Activated CD8-positive, alpha-beta T cell treated with anti-CD3 and anti-CD28 coated beads for 36 hours (primary cell): ENCODE measurements at regions of chr2 and their contacts with region 1.

Region 1: DNA sequence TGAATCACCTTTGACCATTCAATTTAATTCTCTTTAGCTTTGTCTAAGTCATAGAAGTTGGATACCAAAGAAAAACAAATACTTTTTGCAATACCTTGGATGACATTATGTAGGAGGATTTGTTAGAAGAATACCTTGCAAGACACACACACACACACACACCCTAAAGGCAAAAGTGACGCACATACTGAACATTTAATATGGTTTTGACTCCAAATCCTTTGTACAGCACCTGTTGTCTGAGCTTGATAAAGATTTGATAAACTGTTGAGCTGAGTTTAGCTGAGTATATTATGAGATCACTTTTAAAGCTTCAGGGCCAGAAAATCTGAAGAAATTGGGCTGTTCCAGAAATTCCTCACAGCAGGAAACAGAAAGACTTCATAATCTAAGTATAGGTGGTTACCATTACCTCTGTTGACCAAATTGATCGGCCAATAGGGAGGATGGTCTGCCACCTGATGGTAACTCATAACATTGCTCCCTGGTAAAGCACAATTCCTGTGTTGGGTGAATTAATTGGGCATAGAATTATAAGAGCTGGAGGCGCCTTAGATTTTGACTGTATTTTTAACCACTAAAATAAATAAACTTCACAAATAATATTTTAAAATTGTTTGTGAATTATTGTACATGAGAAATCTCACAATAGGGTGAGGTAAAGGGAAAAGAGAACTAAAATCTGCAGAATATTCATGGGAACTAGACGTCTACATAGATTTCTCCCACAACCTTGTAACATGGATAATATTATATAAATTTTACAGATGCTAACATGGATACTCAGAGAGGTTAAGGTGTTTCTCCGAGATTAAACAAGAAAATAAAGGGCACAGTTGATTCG is 21.9 kb upstream of the RPIA start:
- DNase-seq: peak; percentile 56
- ATAC-seq: peak; percentile 95
- H3K4me3 Mint-ChIP-seq: no peak overlapping the region
- H3K27ac Mint-ChIP-seq: no peak overlapping the region
- H3K4me1 Mint-ChIP-seq: no peaks in the 10 kb centered on the region
- H3K27me3 Mint-ChIP-seq: no peaks in the 10 kb centered on the region
- CTCF ChIP-seq: peak; percentile 73

Region 2: GRCh38 chr2:88187038-88187676 is 482.4 kb before region 1 on chr2:
- CTCF ChIA-PET with region 1: no interaction called
- POLR2A ChIA-PET with region 1: no interaction called
- intact Hi-C with region 1: loop called (anchors 5 kb)
- DNase-seq: peak; percentile 72
- ATAC-seq: peak; percentile 46
- H3K4me3 Mint-ChIP-seq: no peak overlapping the region
- H3K27ac Mint-ChIP-seq: no peak overlapping the region
- H3K4me1 Mint-ChIP-seq: peaks cover 4% of the 10 kb centered on the region
- H3K27me3 Mint-ChIP-seq: peaks cover 10% of the 10 kb centered on the region
- CTCF ChIP-seq: no peak

Region 3: DNA sequence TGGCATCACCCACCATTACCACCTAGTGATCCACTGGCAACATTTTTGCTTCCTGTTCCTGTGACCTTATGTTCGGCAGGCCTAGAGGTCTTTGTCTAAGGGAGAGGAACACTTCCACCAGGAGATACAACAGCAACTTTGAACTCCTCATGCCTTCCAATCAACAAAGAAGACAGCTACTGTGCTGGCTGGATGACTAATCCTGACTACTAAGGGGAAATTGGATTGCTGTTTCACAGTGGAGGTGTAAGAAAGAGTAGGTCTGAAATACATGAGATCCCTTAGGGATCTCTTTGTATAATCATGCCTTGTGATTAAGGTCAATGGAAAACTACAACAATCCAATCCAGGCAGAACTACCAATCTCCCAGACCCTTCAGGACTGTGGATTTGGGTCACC is 87.6 kb before region 1 on chr2:
- CTCF ChIA-PET with region 1: interaction called, 191 read pairs
- POLR2A ChIA-PET with region 1: no interaction called
- intact Hi-C with region 1: no loop called
- DNase-seq: no peak
- ATAC-seq: no peak
- H3K4me3 Mint-ChIP-seq: no peak overlapping the region
- H3K27ac Mint-ChIP-seq: no peak overlapping the region
- H3K4me1 Mint-ChIP-seq: no peaks in the 10 kb centered on the region
- H3K27me3 Mint-ChIP-seq: no peaks in the 10 kb centered on the region
- CTCF ChIP-seq: no peak

Region 4: DNA sequence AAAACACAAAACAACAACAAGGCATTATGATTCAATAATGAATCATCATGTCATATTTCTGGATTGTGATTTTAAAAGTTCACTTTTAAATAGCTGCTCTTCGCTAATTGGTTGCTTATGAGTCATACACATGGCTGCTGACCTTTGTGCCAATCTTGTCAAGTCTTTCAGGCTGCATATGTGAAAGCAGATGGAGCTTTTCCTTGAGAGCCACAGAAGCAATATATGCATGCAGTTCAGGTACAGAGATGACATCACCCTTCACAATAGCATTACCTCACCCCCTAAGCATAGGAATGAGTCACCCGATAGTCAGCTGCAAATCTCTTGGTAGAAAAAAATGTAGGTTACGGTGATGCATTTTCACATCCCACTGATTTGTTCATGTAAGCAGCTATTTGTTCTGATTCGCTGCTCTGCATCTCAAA is 69.5 kb before region 1 on chr2:
- CTCF ChIA-PET with region 1: interaction called, 191 read pairs
- POLR2A ChIA-PET with region 1: no interaction called
- intact Hi-C with region 1: no loop called
- DNase-seq: peak; percentile 73
- ATAC-seq: peak; percentile 99
- H3K4me3 Mint-ChIP-seq: no peak overlapping the region
- H3K27ac Mint-ChIP-seq: peak overlapping the region; percentile 34
- H3K4me1 Mint-ChIP-seq: peaks cover 42% of the 10 kb centered on the region
- H3K27me3 Mint-ChIP-seq: no peaks in the 10 kb centered on the region
- CTCF ChIP-seq: no peak

Region 5: GRCh38 chr2:88613921-88614320 is 55.7 kb before region 1 on chr2:
- CTCF ChIA-PET with region 1: interaction called, 12 read pairs
- POLR2A ChIA-PET with region 1: no interaction called
- intact Hi-C with region 1: no loop called
- DNase-seq: no peak
- ATAC-seq: no peak
- H3K4me3 Mint-ChIP-seq: no peak overlapping the region
- H3K27ac Mint-ChIP-seq: no peak overlapping the region
- H3K4me1 Mint-ChIP-seq: peaks cover 16% of the 10 kb centered on the region
- H3K27me3 Mint-ChIP-seq: no peaks in the 10 kb centered on the region
- CTCF ChIP-seq: no peak

Region 6: GRCh38 chr2:88641330-88641729 is 28.3 kb before region 1 on chr2:
- CTCF ChIA-PET with region 1: interaction called, 16 read pairs
- POLR2A ChIA-PET with region 1: no interaction called
- intact Hi-C with region 1: no loop called
- DNase-seq: no peak
- ATAC-seq: no peak
- H3K4me3 Mint-ChIP-seq: no peak overlapping the region
- H3K27ac Mint-ChIP-seq: no peak overlapping the region
- H3K4me1 Mint-ChIP-seq: peaks cover 54% of the 10 kb centered on the region
- H3K27me3 Mint-ChIP-seq: peaks cover 7% of the 10 kb centered on the region
- CTCF ChIP-seq: no peak

Region 7: GRCh38 chr2:88659538-88659916 is 10.1 kb before region 1 on chr2:
- CTCF ChIA-PET with region 1: interaction called, 40 read pairs
- POLR2A ChIA-PET with region 1: interaction called, 3 read pairs
- intact Hi-C with region 1: no loop called
- DNase-seq: no peak
- ATAC-seq: no peak
- H3K4me3 Mint-ChIP-seq: no peak overlapping the region
- H3K27ac Mint-ChIP-seq: no peak overlapping the region
- H3K4me1 Mint-ChIP-seq: no peaks in the 10 kb centered on the region
- H3K27me3 Mint-ChIP-seq: no peaks in the 10 kb centered on the region
- CTCF ChIP-seq: no peak

Region 8: GRCh38 chr2:88753833-88754584 is 84.4 kb after region 1 on chr2:
- CTCF ChIA-PET with region 1: no interaction called
- POLR2A ChIA-PET with region 1: no interaction called
- intact Hi-C with region 1: no loop called
- DNase-seq: peak; percentile 57
- ATAC-seq: peak; percentile 92
- H3K4me3 Mint-ChIP-seq: no peak overlapping the region
- H3K27ac Mint-ChIP-seq: peak overlapping the region; percentile 94
- H3K4me1 Mint-ChIP-seq: peaks cover 46% of the 10 kb centered on the region
- H3K27me3 Mint-ChIP-seq: no peaks in the 10 kb centered on the region
- CTCF ChIP-seq: no peak